Activated T-helper 2 cell treated with anti-CD3 and anti-CD28 coated beads, Interferon-gamma antibody, Interleukin-2, Interleukin-4, amounts not matched to agents 10 μg/mL and 5 μg/mL and 100 μg/mL, durations not matched to agents 14 hours and 24 hours and 36 hours (primary cell): ENCODE measurements at regions of chr6 and their contacts with region 1.

Region 1: GRCh38 chr6:26473758-26474438 is 16.1 kb downstream of the BTN2A1 start:
- DNase-seq: peak; percentile 79
- H3K4me3 Mint-ChIP-seq: peak overlapping the region; percentile 100
- H3K27ac Mint-ChIP-seq: peak overlapping the region; percentile 100
- H3K4me1 Mint-ChIP-seq: peaks cover 29% of the 10 kb centered on the region
- H3K27me3 Mint-ChIP-seq: no peaks in the 10 kb centered on the region

Region 2: GRCh38 chr6:26363882-26364701 is 109.8 kb before region 1 on chr6:
- intact Hi-C with region 1: loop called (anchors 1 kb)
- DNase-seq: no peak
- H3K4me3 Mint-ChIP-seq: no peak overlapping the region
- H3K27ac Mint-ChIP-seq: no peak overlapping the region
- H3K4me1 Mint-ChIP-seq: peaks cover 52% of the 10 kb centered on the region
- H3K27me3 Mint-ChIP-seq: no peaks in the 10 kb centered on the region

Region 3: GRCh38 chr6:26439657-26440056 is 34.2 kb before region 1 on chr6:
- intact Hi-C with region 1: loop called (anchors 1 kb)
- DNase-seq: no peak
- H3K4me3 Mint-ChIP-seq: peak overlapping the region; percentile 96
- H3K27ac Mint-ChIP-seq: peak overlapping the region; percentile 97
- H3K4me1 Mint-ChIP-seq: peaks cover 30% of the 10 kb centered on the region
- H3K27me3 Mint-ChIP-seq: no peaks in the 10 kb centered on the region

Region 4: GRCh38 chr6:26520853-26521599 is 47.1 kb after region 1 on chr6:
- intact Hi-C with region 1: loop called (anchors 1 kb)
- DNase-seq: peak; percentile 78
- H3K4me3 Mint-ChIP-seq: peak overlapping the region; percentile 82
- H3K27ac Mint-ChIP-seq: peak overlapping the region; percentile 83
- H3K4me1 Mint-ChIP-seq: peaks cover 39% of the 10 kb centered on the region
- H3K27me3 Mint-ChIP-seq: peaks cover 2% of the 10 kb centered on the region